Gastrocnemius medialis (tissue), 4 donors: ENCODE measurements at regions of chr4 and their contacts with region 1.

Region 1: GRCh38 chr4:176150356-176150682 is 45.1 kb downstream of the SPATA4 start:
- DNase-seq: no peak
- ATAC-seq: peak; percentile 74 to 88
- H3K4me3 ChIP-seq: no peak overlapping the region
- H3K27ac ChIP-seq: peak overlapping the region in 3 of 4 donors; percentile 14 to 55 (median 42)
- H3K4me1 ChIP-seq: peaks cover 0 to 2% of the 10 kb centered on the region in 2 donors
- H3K27me3 ChIP-seq: no peaks in the 10 kb centered on the region
- CTCF ChIP-seq: peak; percentile 43 to 60 (median 54)
- POLR2A ChIP-seq: no peak

Region 2: GRCh38 chr4:175667122-175667521 is 483.2 kb before region 1 on chr4:
- in situ Hi-C with region 1: no loop called
- intact Hi-C with region 1: loop called (anchors 10 kb)
- DNase-seq: no peak
- ATAC-seq: no peak
- H3K4me3 ChIP-seq: no peak overlapping the region
- H3K27ac ChIP-seq: no peak overlapping the region
- H3K4me1 ChIP-seq: no peaks in the 10 kb centered on the region
- H3K27me3 ChIP-seq: no peaks in the 10 kb centered on the region
- CTCF ChIP-seq: no peak
- POLR2A ChIP-seq: no peak

Region 3: DNA sequence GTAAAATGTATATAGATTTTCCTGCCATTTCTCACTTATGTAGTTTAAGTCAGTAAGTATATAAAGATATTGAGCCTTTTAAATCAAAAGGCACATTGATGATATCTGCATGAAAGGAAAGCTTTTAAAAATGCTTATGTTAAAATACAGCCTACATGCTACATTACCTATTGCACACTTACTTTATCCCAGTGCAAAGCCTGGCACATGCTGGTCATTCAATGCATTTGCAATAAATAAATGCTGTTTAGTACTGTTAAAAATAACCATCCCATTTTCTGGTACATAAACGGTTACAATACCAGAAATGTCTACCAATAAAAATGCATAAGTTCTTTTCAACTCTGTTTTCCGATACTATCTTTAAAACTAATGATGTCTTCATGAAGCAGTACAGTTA is 67.2 kb after region 1 on chr4:
- in situ Hi-C with region 1: no loop called
- intact Hi-C with region 1: no loop called
- DNase-seq: no peak
- ATAC-seq: no peak
- H3K4me3 ChIP-seq: no peak overlapping the region
- H3K27ac ChIP-seq: no peak overlapping the region
- H3K4me1 ChIP-seq: no peaks in the 10 kb centered on the region
- H3K27me3 ChIP-seq: no peaks in the 10 kb centered on the region
- CTCF ChIP-seq: no peak
- POLR2A ChIP-seq: no peak

Region 4: GRCh38 chr4:176230836-176231235 is 80.5 kb after region 1 on chr4:
- in situ Hi-C with region 1: no loop called
- intact Hi-C with region 1: loop called (anchors 5 kb)
- DNase-seq: no peak
- ATAC-seq: peak; percentile 76 to 78
- H3K4me3 ChIP-seq: peak overlapping the region; percentile 17 to 37 (median 32)
- H3K27ac ChIP-seq: peak overlapping the region; percentile 82 to 91 (median 86)
- H3K4me1 ChIP-seq: peaks cover 33 to 79% of the 10 kb centered on the region in 2 donors
- H3K27me3 ChIP-seq: no peaks in the 10 kb centered on the region
- CTCF ChIP-seq: no peak
- POLR2A ChIP-seq: peak; percentile 7 to 29

Region 5: DNA sequence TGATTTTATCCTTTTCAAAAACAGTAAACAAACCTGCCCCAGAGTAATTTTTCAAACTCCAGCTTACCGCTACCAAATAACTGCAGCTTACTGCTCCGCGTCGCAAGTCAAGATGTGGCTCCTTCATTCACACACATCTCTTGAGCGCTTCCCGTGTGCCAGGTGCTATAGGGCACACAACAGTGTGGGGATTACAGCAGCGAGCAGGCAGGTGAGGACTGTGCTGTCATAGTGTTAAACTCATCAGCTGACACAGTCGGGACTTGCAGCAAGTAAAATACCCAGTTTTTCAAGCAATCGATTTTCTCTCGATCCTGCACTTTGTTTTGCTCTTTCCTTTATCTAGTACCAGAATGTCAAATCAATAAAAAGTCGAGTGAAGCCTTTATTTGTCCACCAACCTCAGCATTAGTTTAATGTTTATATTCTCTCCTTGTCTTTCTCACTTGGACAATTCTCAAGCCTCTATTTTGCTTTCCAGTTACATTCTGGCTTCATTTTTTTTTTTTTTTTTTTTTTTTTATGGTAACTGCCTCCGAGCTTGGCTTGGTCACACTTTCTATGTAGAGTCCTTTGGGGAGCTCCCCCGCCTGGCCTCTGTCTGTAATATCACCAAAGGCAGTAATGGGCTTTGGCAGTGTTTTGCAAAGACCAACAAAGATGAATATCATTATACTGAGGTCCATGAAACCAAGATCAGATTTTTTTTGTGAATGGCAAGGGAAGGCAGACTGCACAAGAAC is 127.0 kb after region 1 on chr4:
- in situ Hi-C with region 1: loop called in 3 of 4 experiments (anchors 5 kb)
- intact Hi-C with region 1: loop called (anchors 1 kb)
- DNase-seq: peak; percentile 38 to 73
- ATAC-seq: peak; percentile 64 to 69
- H3K4me3 ChIP-seq: peak overlapping the region; percentile 27 to 36 (median 28)
- H3K27ac ChIP-seq: peak overlapping the region; percentile 88 to 98 (median 94)
- H3K4me1 ChIP-seq: peaks cover 0 to 43% of the 10 kb centered on the region in 2 donors
- H3K27me3 ChIP-seq: no peaks in the 10 kb centered on the region
- CTCF ChIP-seq: peak; percentile 39 to 64 (median 46)
- POLR2A ChIP-seq: no peak

Region 6: DNA sequence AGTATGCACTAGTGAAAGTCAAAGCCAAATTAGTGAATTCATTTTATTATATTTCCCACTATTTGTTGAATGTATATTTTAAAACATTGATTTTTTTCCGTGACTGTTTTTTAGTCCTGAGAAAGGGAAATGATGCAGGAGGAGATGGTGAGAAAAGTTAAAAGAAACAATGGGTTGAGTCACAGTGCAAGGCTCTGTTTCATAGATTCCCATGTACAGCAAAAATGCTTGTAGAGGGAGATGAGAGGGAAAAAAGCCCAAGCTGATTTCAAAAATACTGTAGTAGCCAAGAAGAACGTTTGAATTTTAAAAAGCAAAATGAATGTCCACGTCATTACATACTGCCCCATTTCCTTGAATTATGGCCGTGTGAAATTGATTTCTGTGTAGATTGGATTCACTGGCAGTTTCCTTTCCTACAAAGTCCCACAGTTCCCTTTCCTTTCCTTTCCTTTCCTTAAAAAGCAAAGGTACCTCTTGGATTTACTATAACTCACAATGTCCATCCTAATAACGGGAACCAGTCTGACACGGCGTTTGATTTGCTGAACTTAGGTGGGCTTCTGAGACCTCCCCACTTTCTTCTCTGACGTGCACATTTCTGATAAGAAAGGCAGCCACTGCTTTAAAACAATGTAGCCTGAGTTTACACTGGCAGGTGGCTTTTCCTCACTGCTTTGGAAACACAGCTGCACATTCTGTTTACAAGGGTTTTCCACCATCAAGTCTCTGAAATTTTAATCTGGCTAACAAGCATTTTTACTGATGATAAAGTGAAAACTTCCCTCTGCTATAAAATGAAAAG is 233.2 kb after region 1 on chr4:
- in situ Hi-C with region 1: no loop called
- intact Hi-C with region 1: no loop called
- DNase-seq: no peak
- ATAC-seq: no peak
- H3K4me3 ChIP-seq: no peak overlapping the region
- H3K27ac ChIP-seq: no peak overlapping the region
- H3K4me1 ChIP-seq: no peaks in the 10 kb centered on the region
- H3K27me3 ChIP-seq: no peaks in the 10 kb centered on the region
- CTCF ChIP-seq: no peak
- POLR2A ChIP-seq: no peak